B cell (primary cell): ENCODE measurements at regions of chr3 and their contacts with region 1.

Region 1: GRCh38 chr3:184874709-184875644 is 63.0 kb downstream of the VPS8 start:
- DNase-seq: peak; percentile 48
- ATAC-seq: no peak
- H3K4me3 ChIP-seq: no peak overlapping the region
- H3K4me3 Mint-ChIP-seq: no peak overlapping the region
- H3K27ac ChIP-seq: no peak overlapping the region
- H3K27ac Mint-ChIP-seq: no peak overlapping the region
- H3K4me1 ChIP-seq: no peaks in the 10 kb centered on the region
- H3K4me1 Mint-ChIP-seq: no peaks in the 10 kb centered on the region
- H3K27me3 ChIP-seq: no peaks in the 10 kb centered on the region
- H3K27me3 Mint-ChIP-seq: no peaks in the 10 kb centered on the region
- CTCF ChIP-seq: peak; percentile 74

Region 2: DNA sequence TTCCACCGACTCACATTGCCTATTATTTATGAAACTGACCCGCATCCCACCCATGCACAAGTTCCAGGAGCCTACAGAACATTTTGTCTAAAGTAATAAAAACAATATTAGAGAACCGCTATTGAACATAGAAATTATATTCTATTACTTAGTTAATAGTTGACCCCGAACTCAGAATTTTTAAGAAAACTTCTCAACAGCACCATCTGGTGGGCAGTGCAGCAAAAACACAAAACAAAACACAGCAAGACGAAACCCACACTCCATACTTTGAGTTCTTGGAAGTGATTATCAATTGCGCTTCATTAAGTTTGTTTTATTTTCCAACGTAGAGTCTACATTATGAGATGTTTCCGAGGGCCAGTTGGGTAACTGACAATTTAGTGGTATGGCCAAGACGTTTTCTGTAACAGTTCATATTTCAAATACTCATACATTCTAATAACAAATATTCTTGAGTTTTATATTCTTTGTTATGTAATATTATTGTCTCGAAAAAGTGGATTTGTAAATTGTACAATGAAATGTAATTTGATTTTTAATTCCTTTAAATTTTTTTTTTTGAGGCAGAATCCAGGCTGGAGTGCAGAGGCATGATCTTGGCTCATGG is 301.9 kb after region 1 on chr3:
- CTCF ChIA-PET with region 1: interaction called, 5 read pairs
- POLR2A ChIA-PET with region 1: no interaction called
- intact Hi-C with region 1: loop called (anchors 1 kb)
- DNase-seq: peak; percentile 47
- ATAC-seq: no peak
- H3K4me3 ChIP-seq: no peak overlapping the region
- H3K4me3 Mint-ChIP-seq: no peak overlapping the region
- H3K27ac ChIP-seq: no peak overlapping the region
- H3K27ac Mint-ChIP-seq: no peak overlapping the region
- H3K4me1 ChIP-seq: peaks cover 8 to 10% of the 10 kb centered on the region in 2 donors
- H3K4me1 Mint-ChIP-seq: peaks cover 13% of the 10 kb centered on the region
- H3K27me3 ChIP-seq: peaks cover 0 to 7% (median 2%) of the 10 kb centered on the region in 4 experiments
- H3K27me3 Mint-ChIP-seq: no peaks in the 10 kb centered on the region
- CTCF ChIP-seq: peak; percentile 89

Region 3: DNA sequence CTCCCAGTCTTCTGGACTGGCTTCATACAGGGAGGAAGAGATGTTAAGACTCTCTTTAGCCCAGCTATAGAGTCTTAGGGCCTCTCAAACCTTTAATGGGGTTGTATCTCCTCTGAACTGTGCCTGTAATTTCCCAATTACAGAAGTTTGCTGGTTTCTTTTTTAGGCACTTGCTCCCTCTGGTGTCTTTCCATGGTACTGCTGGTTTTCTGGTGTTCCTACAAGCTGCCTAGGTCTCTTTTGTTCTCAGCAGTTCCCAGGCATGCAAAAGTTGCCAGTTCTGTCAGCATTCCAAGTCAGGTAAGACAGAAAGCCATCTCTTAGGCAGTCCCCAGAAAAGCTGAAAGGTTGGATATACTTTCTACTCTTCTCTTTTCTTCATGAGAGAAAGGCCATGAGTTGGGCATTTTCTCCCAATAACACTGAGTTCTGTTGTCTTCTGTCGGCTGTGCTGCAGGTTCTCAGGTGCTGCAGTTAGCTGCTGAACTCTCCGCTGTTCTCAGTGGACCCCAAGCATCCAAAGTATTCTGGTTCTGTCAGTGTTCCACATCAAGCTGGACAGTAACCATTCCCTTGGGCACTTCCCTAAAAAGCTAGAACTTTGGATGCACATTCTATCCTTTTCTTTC is 433.3 kb after region 1 on chr3:
- CTCF ChIA-PET with region 1: interaction called, 39 read pairs
- POLR2A ChIA-PET with region 1: no interaction called
- intact Hi-C with region 1: no loop called
- DNase-seq: peak; percentile 77
- ATAC-seq: peak; percentile 49
- H3K4me3 ChIP-seq: no peak overlapping the region
- H3K4me3 Mint-ChIP-seq: no peak overlapping the region
- H3K27ac ChIP-seq: no peak overlapping the region
- H3K27ac Mint-ChIP-seq: no peak overlapping the region
- H3K4me1 ChIP-seq: no peaks in the 10 kb centered on the region
- H3K4me1 Mint-ChIP-seq: no peaks in the 10 kb centered on the region
- H3K27me3 ChIP-seq: no peaks in the 10 kb centered on the region
- H3K27me3 Mint-ChIP-seq: no peaks in the 10 kb centered on the region
- CTCF ChIP-seq: peak; percentile 82